GM18951 (cell line): ENCODE measurements at regions of chr17 and their contacts with region 1.

Region 1: GRCh38 chr17:58991718-58992331 is 114.9 kb downstream of the TRIM37 start:
- POLR2A ChIP-seq: no peak

Region 2: DNA sequence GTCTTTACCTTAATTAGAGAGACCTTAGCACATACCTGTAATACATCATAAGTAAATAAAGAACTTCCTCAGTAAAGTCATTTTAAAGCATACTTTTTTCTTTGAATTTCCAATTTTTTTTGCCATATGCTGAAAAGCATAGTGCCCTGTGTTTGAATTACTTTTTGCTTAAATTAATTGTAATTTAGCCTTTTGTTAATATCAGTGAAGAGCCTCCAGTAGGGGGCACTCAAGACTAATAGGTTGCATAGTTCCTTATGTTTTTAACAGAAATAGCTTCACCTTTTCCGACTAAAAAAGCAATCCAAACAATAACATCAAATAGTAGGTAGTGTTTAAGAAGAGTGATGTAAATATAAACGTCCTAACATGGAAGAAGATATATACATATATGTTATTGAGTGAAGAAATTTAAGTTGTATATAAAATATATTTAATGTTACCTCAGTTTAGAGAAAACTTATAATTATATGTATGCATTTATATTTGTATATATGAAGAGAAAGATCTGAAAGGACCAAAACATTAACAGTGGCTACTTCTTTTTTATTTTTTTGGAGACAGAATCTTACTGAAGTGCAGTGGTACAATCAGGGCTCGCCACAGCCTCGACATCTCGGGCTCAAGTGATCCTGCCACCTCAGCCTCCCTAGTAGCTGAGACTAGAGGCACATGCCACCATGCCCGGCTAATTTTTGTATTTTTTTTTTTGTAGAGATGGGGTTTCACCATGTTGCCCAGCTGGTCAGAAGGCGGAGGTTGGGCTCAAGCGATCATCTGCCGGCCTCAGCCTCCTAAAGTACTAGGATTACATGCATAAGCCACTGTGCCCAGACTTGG is 280.7 kb before region 1 on chr17:
- in situ Hi-C with region 1: loop called (anchors 10 kb)
- POLR2A ChIP-seq: no peak